CD4-positive, alpha-beta T cell (primary cell): ENCODE measurements at regions of chr6 and their contacts with region 1.

Region 1: GRCh38 chr6:33271458-33272274 is at the starts of genes RPS18 and VPS52:
- DNase-seq: peak; percentile 83 to 98 (median 89)
- ATAC-seq: peak; percentile 80
- H3K4me3 ChIP-seq: peak within 1 kb of the TSS; percentile 93
- H3K4me3 Mint-ChIP-seq: peak within 1 kb of the TSS; percentile 96
- H3K27ac ChIP-seq: peak within 1 kb of the TSS; percentile 92
- H3K27ac Mint-ChIP-seq: peak within 1 kb of the TSS; percentile 97
- H3K4me1 ChIP-seq: peaks cover 62% of the 10 kb centered on the region
- H3K4me1 Mint-ChIP-seq: peaks cover 70% of the 10 kb centered on the region
- H3K27me3 ChIP-seq: no peaks in the 10 kb centered on the region
- H3K27me3 Mint-ChIP-seq: no peaks in the 10 kb centered on the region
- CTCF ChIP-seq: no peak
- total RNA-seq, gene RPS18: 5,159 to 5,309 TPM
- total RNA-seq, gene VPS52: 67.9 TPM

Region 2: GRCh38 chr6:31901953-31902643 is 1369.6 kb before region 1 on chr6 and contains the start of gene ZBTB12:
- CTCF ChIA-PET with region 1: interaction called, 3 read pairs
- POLR2A ChIA-PET with region 1: no interaction called
- intact Hi-C with region 1: loop called in 1 of 2 experiments (anchors 5 kb)
- DNase-seq: peak; percentile 67 to 94 (median 84)
- ATAC-seq: peak; percentile 48
- H3K4me3 ChIP-seq: peak within 1 kb of the TSS; percentile 68
- H3K4me3 Mint-ChIP-seq: peak within 1 kb of the TSS; percentile 89
- H3K27ac ChIP-seq: peak within 1 kb of the TSS; percentile 13 to 72
- H3K27ac Mint-ChIP-seq: peak within 1 kb of the TSS; percentile 65
- H3K4me1 ChIP-seq: peaks cover 39% of the 10 kb centered on the region
- H3K4me1 Mint-ChIP-seq: peaks cover 35% of the 10 kb centered on the region
- H3K27me3 ChIP-seq: no peaks in the 10 kb centered on the region
- H3K27me3 Mint-ChIP-seq: no peaks in the 10 kb centered on the region
- CTCF ChIP-seq: no peak
- total RNA-seq, gene ZBTB12: 0.28 to 0.33 TPM

Region 3: GRCh38 chr6:32952817-32953739 is 318.6 kb before region 1 on chr6 and contains the start of gene HLA-DMA:
- CTCF ChIA-PET with region 1: no interaction called
- POLR2A ChIA-PET with region 1: no interaction called
- intact Hi-C with region 1: no loop called
- DNase-seq: peak; percentile 57 to 92 (median 70)
- ATAC-seq: peak; percentile 98
- H3K4me3 ChIP-seq: peak within 1 kb of the TSS; percentile 49
- H3K4me3 Mint-ChIP-seq: peak within 1 kb of the TSS; percentile 71
- H3K27ac ChIP-seq: peak within 1 kb of the TSS; percentile 5 to 44
- H3K27ac Mint-ChIP-seq: peak within 1 kb of the TSS; percentile 82
- H3K4me1 ChIP-seq: peaks cover 26% of the 10 kb centered on the region
- H3K4me1 Mint-ChIP-seq: peaks cover 45% of the 10 kb centered on the region
- H3K27me3 ChIP-seq: no peaks in the 10 kb centered on the region
- H3K27me3 Mint-ChIP-seq: no peaks in the 10 kb centered on the region
- CTCF ChIP-seq: peak; percentile 86
- total RNA-seq, gene HLA-DMA: 14.4 to 16.5 TPM

Region 4: DNA sequence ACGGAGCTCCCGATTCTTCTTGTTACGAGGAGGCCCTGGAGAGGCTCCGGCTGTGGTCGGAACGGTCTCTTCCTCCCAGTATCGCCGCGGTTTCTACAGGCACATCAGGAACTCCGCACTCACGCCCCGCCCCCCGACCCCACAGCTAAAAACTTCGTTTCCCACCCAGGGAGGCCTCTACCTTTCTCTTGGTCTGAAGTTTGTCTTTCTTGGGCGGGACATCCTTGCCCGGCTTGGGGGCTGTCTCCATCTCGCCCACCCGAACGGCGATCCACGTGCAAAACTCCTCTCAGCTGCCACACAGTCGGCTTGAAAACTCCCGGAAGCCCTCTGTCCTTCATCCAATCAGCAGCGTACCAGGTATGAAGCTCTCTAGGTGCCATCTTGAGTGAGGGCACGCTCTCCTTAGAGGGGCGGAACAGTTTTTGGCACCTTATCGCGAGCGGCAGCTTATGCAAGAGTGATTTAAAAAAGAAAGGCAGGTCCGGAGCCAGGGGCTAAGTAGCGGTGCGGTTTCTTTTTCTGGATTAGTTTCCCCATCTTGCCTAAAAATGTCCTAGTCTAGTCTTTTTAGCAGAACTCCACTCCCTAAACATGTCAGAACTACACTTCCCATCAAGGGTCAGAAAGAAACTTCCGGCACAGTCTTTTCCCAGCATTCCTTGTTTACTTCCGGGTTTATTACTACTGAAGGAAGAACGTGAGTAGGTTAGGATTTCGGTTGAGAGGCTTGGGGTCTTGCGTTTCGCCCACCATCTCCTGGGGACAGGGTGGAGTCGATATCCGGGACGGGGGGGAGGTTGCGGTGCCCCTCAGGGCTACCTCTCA is 17.5 kb after region 1 on chr6 and contains the starts of genes PFDN6 and WDR46:
- CTCF ChIA-PET with region 1: interaction called, 14 read pairs
- POLR2A ChIA-PET with region 1: interaction called, 105 read pairs
- intact Hi-C with region 1: loop called (anchors 1 kb)
- DNase-seq: peak; percentile 62 to 92 (median 76)
- ATAC-seq: peak; percentile 97
- H3K4me3 ChIP-seq: peak within 1 kb of the TSS; percentile 80
- H3K4me3 Mint-ChIP-seq: peak within 1 kb of the TSS; percentile 97
- H3K27ac ChIP-seq: peak within 1 kb of the TSS; percentile 71 to 83
- H3K27ac Mint-ChIP-seq: peak within 1 kb of the TSS; percentile 83
- H3K4me1 ChIP-seq: peaks cover 39% of the 10 kb centered on the region
- H3K4me1 Mint-ChIP-seq: peaks cover 45% of the 10 kb centered on the region
- H3K27me3 ChIP-seq: no peaks in the 10 kb centered on the region
- H3K27me3 Mint-ChIP-seq: no peaks in the 10 kb centered on the region
- CTCF ChIP-seq: no peak
- total RNA-seq, gene PFDN6: 9.7 to 11.7 TPM
- total RNA-seq, gene WDR46: 13.6 to 15.8 TPM

Region 5: DNA sequence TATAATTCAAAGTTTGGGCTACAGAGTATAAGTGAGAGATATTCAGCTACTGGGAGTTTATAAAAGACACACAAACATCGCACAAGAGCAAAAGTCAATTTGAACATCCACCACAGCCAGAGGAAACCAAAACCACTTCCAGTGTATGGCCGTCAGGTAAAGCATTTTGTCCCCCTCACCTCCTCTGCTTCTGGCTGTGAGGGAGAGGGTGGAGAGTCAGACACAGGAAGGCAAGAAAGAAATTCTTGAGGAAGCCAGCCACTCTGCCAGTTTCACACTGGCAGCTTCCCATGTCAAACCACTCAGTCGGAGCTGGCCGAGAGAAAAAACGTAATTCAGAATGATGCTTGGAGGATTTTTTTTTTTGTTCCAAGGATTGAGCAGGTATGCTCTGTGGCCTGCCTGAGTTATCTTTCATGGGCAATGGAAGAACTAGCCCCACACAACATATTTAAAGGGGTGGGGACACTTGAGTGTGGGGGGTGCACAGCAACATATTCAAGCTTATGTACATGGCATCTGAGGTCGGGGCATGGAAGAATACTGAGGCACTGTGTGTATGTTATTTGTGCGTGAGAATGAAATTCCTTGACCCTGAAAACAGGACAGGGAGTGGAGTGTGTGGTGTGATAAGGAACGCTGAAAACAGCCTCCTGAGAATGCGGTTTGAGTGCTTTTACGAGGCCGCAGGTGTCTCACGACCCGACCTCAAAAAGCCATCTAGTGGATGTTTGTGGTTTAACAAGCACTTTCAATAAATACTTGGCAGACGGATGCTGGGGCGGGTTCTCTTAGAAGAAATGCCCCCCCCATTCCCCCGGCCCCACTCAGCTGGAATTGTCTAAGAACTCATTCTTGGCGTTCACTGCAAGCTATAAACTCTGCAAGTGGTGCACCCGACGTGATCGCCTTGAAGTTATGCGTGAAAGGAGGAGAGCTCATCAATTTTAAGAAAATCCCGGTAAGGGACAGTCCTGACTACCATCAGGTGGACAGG is 73.3 kb after region 1 on chr6:
- CTCF ChIA-PET with region 1: interaction called, 16 read pairs
- POLR2A ChIA-PET with region 1: interaction called, 57 read pairs
- intact Hi-C with region 1: loop called in 1 of 2 experiments (anchors 1 kb)
- DNase-seq: peak; percentile 53 to 93 (median 62)
- ATAC-seq: peak; percentile 52
- H3K4me3 ChIP-seq: peak overlapping the region; percentile 24
- H3K4me3 Mint-ChIP-seq: peak overlapping the region; percentile 90
- H3K27ac ChIP-seq: peak overlapping the region; percentile 79 to 88
- H3K27ac Mint-ChIP-seq: peak overlapping the region; percentile 98
- H3K4me1 ChIP-seq: peaks cover 49% of the 10 kb centered on the region
- H3K4me1 Mint-ChIP-seq: peaks cover 38% of the 10 kb centered on the region
- H3K27me3 ChIP-seq: no peaks in the 10 kb centered on the region
- H3K27me3 Mint-ChIP-seq: no peaks in the 10 kb centered on the region
- CTCF ChIP-seq: peak; percentile 64

Region 6: GRCh38 chr6:33425668-33426577 is 154.3 kb after region 1 on chr6:
- CTCF ChIA-PET with region 1: interaction called, 8 read pairs
- POLR2A ChIA-PET with region 1: interaction called, 16 read pairs
- intact Hi-C with region 1: loop called in 1 of 2 experiments (anchors 5 kb)
- DNase-seq: peak; percentile 65 to 91 (median 80)
- ATAC-seq: peak; percentile 48
- H3K4me3 ChIP-seq: peak overlapping the region; percentile 71
- H3K4me3 Mint-ChIP-seq: peak overlapping the region; percentile 94
- H3K27ac ChIP-seq: peak overlapping the region; percentile 86 to 92
- H3K27ac Mint-ChIP-seq: peak overlapping the region; percentile 99
- H3K4me1 ChIP-seq: peaks cover 60% of the 10 kb centered on the region
- H3K4me1 Mint-ChIP-seq: peaks cover 80% of the 10 kb centered on the region
- H3K27me3 ChIP-seq: no peaks in the 10 kb centered on the region
- H3K27me3 Mint-ChIP-seq: no peaks in the 10 kb centered on the region
- CTCF ChIP-seq: peak; percentile 65

Region 7: GRCh38 chr6:33599413-33599911 is 327.8 kb after region 1 on chr6:
- CTCF ChIA-PET with region 1: no interaction called
- POLR2A ChIA-PET with region 1: no interaction called
- intact Hi-C with region 1: no loop called
- DNase-seq: no peak
- ATAC-seq: no peak
- H3K4me3 ChIP-seq: no peak overlapping the region
- H3K4me3 Mint-ChIP-seq: no peak overlapping the region
- H3K27ac ChIP-seq: no peak overlapping the region
- H3K27ac Mint-ChIP-seq: no peak overlapping the region
- H3K4me1 ChIP-seq: peaks cover 24% of the 10 kb centered on the region
- H3K4me1 Mint-ChIP-seq: no peaks in the 10 kb centered on the region
- H3K27me3 ChIP-seq: no peaks in the 10 kb centered on the region
- H3K27me3 Mint-ChIP-seq: no peaks in the 10 kb centered on the region
- CTCF ChIP-seq: no peak

Region 8: DNA sequence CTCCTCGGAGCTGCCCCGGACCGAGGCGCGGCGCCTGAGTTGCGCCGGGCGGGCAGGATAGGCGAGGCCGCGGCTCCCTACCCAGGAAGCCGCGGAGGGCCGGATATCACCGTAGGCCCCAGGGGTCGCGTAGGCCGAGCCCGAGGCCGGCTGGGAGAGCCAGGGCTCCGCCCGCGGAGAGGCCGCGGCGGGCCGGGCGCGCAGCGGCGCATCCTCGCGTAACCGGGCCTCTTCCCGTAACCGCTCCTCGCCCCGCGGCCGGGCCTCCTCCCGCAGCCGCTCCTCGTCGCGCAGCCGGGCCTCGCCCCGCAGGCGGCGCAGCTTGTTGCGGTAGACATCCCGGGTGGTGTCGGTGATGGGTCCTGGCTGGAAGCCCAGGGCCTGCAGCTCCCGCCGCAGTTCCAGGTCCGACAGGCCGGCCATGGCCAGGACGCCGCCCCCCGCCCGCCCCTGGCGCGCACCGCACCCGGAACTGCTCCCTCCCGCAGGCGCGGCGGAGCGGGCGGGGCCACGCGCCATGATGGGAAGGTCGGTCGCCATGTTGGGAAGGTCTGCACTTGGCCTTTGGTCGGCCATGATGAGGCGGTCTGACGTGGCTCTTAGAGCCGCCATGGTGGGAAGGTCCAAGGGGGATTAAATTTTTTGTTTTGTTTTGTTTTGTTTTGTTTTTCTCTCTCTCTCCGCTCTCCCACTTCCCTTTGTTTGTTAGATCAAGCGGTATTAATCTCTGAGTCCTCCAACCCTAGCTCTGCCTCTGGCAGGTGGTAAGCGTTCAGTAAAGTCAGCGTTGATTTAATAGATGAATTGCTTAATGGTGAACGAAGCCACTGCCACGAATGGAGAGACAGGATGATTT is 517.3 kb after region 1 on chr6 and contains the start of gene LEMD2:
- CTCF ChIA-PET with region 1: no interaction called
- POLR2A ChIA-PET with region 1: no interaction called
- intact Hi-C with region 1: loop called in 1 of 2 experiments (anchors 10 kb)
- DNase-seq: peak; percentile 81 to 96 (median 92)
- ATAC-seq: peak; percentile 88
- H3K4me3 ChIP-seq: peak within 1 kb of the TSS; percentile 53
- H3K4me3 Mint-ChIP-seq: peak within 1 kb of the TSS; percentile 94
- H3K27ac ChIP-seq: peak within 1 kb of the TSS; percentile 50 to 87
- H3K27ac Mint-ChIP-seq: peak within 1 kb of the TSS; percentile 94
- H3K4me1 ChIP-seq: peaks cover 45% of the 10 kb centered on the region
- H3K4me1 Mint-ChIP-seq: peaks cover 47% of the 10 kb centered on the region
- H3K27me3 ChIP-seq: no peaks in the 10 kb centered on the region
- H3K27me3 Mint-ChIP-seq: no peaks in the 10 kb centered on the region
- CTCF ChIP-seq: no peak
- total RNA-seq, gene LEMD2: 122 to 124 TPM